Caco-2 (cell line): ENCODE measurements at regions of chr13 and their contacts with region 1.

Region 1: GRCh38 chr13:48647630-48648029 is 6.1 kb upstream of the CYSLTR2 start:
- DNase-seq: peak; percentile 47 to 49
- H3K4me3 ChIP-seq: no peak overlapping the region
- H3K4me3 Mint-ChIP-seq: no peak overlapping the region
- H3K27ac Mint-ChIP-seq: no peak overlapping the region
- H3K4me1 ChIP-seq: no peaks in the 10 kb centered on the region
- H3K4me1 Mint-ChIP-seq: no peaks in the 10 kb centered on the region
- H3K27me3 ChIP-seq: no peaks in the 10 kb centered on the region; the same call in 1 of the 2 replicates
- H3K27me3 Mint-ChIP-seq: no peaks in the 10 kb centered on the region
- CTCF ChIP-seq: peak; percentile 43 to 53

Region 2: DNA sequence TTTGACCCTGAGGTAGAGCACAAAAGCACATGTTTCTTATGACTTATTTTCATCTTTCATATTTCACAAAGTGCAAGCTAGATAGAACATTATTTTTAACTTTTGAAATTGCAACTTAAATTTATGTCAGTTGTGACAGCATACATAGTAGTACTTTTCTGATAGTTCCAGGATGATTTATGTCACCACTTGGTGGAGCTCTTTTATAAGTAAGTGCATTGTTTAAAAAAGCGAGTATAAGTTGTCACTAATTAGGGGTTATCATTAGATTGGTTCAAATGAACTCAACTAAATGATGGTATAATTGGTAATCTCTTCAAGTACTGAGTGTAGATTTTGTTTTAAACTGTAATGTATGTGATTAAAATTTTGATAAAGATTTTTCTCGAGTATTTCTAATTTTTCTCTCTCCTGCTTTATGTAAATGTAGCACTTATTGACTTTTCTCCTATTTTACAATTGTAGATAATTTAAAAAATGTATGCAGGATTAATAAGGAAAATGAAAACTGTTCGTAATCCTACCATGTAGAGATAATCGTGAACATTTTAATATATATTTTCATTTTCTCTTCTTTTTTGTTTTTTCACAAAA is 313.0 kb before region 1 on chr13:
- CTCF ChIA-PET with region 1: no interaction called
- POLR2A ChIA-PET with region 1: no interaction called
- intact Hi-C with region 1: loop called (anchors 5 kb)
- DNase-seq: peak in 1 of 2 experiments; percentile 17
- H3K4me3 ChIP-seq: no peak overlapping the region
- H3K4me3 Mint-ChIP-seq: no peak overlapping the region
- H3K27ac Mint-ChIP-seq: no peak overlapping the region
- H3K4me1 ChIP-seq: no peaks in the 10 kb centered on the region
- H3K4me1 Mint-ChIP-seq: no peaks in the 10 kb centered on the region
- H3K27me3 ChIP-seq: no peaks in the 10 kb centered on the region
- H3K27me3 Mint-ChIP-seq: no peaks in the 10 kb centered on the region
- CTCF ChIP-seq: peak; percentile 29 to 55

Region 3: DNA sequence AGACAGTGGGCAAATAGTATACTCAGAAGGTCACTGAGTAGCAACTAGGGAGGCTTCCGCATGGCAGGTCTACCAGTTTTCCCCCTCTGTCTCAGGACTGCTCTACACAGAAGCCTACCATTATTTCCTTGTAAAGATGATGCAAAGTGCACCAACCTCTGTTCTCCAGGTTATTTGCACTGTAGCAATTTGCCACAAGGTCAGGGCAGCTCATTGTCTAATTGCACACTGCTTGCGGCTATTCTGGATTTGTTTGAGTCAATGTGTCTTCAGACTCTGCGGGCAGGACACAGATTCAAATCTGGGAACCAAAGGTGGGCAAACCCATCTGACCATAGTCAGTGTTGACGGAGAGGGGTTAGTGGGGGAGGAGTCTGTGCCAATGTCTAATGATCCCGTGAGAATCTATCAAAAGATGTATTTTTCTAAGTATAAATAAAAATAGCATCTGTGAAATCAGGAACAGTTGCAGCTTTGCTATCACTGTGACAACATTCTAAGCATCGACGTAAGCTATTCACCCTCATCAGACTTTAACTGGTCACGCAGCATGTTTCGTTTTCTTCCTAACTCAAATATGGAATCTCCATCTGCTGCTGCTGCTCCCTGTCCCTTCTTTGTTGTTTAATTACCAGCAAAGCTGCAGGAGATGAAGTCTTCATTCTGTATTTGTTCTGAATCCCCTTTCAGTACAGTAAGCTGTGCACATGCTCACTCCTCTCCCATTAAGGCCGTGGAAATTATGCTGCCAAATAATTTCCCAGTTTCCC is 32.5 kb after region 1 on chr13:
- CTCF ChIA-PET with region 1: no interaction called
- POLR2A ChIA-PET with region 1: no interaction called
- intact Hi-C with region 1: no loop called
- DNase-seq: no peak
- H3K4me3 ChIP-seq: no peak overlapping the region
- H3K4me3 Mint-ChIP-seq: no peak overlapping the region
- H3K27ac Mint-ChIP-seq: no peak overlapping the region
- H3K4me1 ChIP-seq: no peaks in the 10 kb centered on the region
- H3K4me1 Mint-ChIP-seq: no peaks in the 10 kb centered on the region
- H3K27me3 ChIP-seq: no peaks in the 10 kb centered on the region; the same call in 1 of the 2 replicates
- H3K27me3 Mint-ChIP-seq: peaks cover 30% of the 10 kb centered on the region
- CTCF ChIP-seq: no peak

Region 4: GRCh38 chr13:48852911-48853727 is 205.5 kb after region 1 on chr13:
- CTCF ChIA-PET with region 1: no interaction called
- POLR2A ChIA-PET with region 1: no interaction called
- intact Hi-C with region 1: no loop called
- DNase-seq: no peak
- H3K4me3 ChIP-seq: no peak overlapping the region
- H3K4me3 Mint-ChIP-seq: no peak overlapping the region
- H3K27ac Mint-ChIP-seq: no peak overlapping the region
- H3K4me1 ChIP-seq: 0 out of 2 replicates have a peak, but pooled peaks cover 10% of the 10 kb centered on the region
- H3K4me1 Mint-ChIP-seq: no peaks in the 10 kb centered on the region
- H3K27me3 ChIP-seq: no peaks in the 10 kb centered on the region
- H3K27me3 Mint-ChIP-seq: peaks cover 5% of the 10 kb centered on the region
- CTCF ChIP-seq: no peak